Calu3 (cell line): ENCODE measurements at regions of chr10 and their contacts with region 1.

Region 1: GRCh38 chr10:987870-988666 is at the start of gene GTPBP4:
- DNase-seq: peak; percentile 96
- H3K4me3 Mint-ChIP-seq: peak within 1 kb of the TSS; percentile 90
- H3K27ac Mint-ChIP-seq: peak within 1 kb of the TSS; percentile 98
- H3K4me1 Mint-ChIP-seq: peaks cover 38% of the 10 kb centered on the region
- H3K27me3 Mint-ChIP-seq: no peaks in the 10 kb centered on the region
- CTCF ChIP-seq: no peak
- total RNA-seq, gene GTPBP4: 123 and 128 TPM in 2 replicates

Region 2: GRCh38 chr10:839550-840205 is 148.4 kb before region 1 on chr10:
- CTCF ChIA-PET with region 1: no interaction called
- intact Hi-C with region 1: loop called (anchors 10 kb)
- DNase-seq: no peak
- H3K4me3 Mint-ChIP-seq: no peak overlapping the region
- H3K27ac Mint-ChIP-seq: no peak overlapping the region
- H3K4me1 Mint-ChIP-seq: no peaks in the 10 kb centered on the region
- H3K27me3 Mint-ChIP-seq: no peaks in the 10 kb centered on the region
- CTCF ChIP-seq: no peak

Region 3: DNA sequence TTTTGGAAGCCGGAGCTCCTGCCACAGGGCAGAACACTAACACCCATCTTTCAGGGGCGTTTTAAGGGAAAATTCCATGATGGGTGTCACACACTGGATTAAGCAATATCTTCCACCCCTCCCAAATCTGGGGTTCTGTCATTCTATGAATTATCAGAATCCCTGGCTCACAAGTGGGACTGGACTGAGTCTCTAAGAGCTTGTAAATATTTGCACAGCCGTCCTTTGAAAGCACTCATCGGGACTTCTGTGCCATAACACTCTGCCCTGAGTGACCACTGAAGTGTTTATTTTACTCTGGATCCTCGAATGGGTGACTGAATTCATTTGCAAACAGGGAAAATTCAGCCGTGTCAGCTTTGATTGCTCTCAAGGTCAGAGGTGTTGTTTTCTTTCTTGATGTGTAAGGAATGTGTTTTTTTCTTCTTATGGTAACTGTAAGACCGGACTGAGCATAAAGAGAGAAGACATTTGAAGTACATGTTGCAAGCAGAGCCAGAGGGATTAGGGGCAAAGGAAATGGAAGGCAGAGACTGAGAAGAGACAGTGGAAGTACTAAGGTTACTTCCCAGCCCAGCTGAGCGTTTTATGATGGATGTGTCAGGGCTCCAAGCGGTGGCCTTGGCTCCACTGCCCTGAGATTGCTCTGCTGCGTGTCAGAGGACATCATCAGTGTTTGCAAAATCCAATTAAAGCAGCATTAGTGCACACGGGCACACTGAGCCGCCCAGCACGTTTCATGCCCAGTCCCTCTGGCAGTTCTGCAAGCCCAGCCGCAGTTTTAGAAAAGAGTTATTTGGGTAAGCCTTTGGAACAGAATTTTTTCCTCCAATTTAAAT is 17.5 kb before region 1 on chr10:
- CTCF ChIA-PET with region 1: interaction called, 12 read pairs
- intact Hi-C with region 1: loop called (anchors 1 kb)
- DNase-seq: no peak
- H3K4me3 Mint-ChIP-seq: peak overlapping the region; percentile 32
- H3K27ac Mint-ChIP-seq: peak overlapping the region; percentile 70
- H3K4me1 Mint-ChIP-seq: peaks cover 55% of the 10 kb centered on the region
- H3K27me3 Mint-ChIP-seq: no peaks in the 10 kb centered on the region
- CTCF ChIP-seq: no peak